GM12878 (cell line): ENCODE measurements at regions of chr6 and their contacts with region 1.

Region 1: GRCh38 chr6:15621203-15622044 is 41.4 kb downstream of the DTNBP1 start:
- DNase-seq: peak; percentile 62
- ATAC-seq: peak; percentile 100
- H3K4me3 ChIP-seq: no peak overlapping the region
- H3K27ac ChIP-seq: peak overlapping the region; percentile 82
- H3K4me1 ChIP-seq: peaks cover 12% of the 10 kb centered on the region
- H3K27me3 ChIP-seq: no peaks in the 10 kb centered on the region
- CTCF ChIP-seq: no peak
- EP300 ChIP-seq: 0 out of 4 replicates have a peak, but pooled peaks of 1 of the 2 experiments have one; percentile 17
- POLR2A ChIP-seq: peak; percentile 54; the same call in 1 of the 2 replicates
- RAD21 ChIP-seq: no peak; the same call in 1 of the 2 replicates

Region 2: GRCh38 chr6:15327271-15327670 is 294.2 kb before region 1 on chr6:
- CTCF ChIA-PET with region 1: interaction called, 3 read pairs
- POLR2A ChIA-PET with region 1: no interaction called
- RAD21 ChIA-PET with region 1: no interaction called
- SMC1A ChIA-PET with region 1: interaction called, 3 read pairs
- in situ Hi-C with region 1: no loop called
- intact Hi-C with region 1: loop called (anchors 10 kb)
- DNase-seq: no peak
- ATAC-seq: peak; percentile 66
- H3K4me3 ChIP-seq: no peak overlapping the region; the same call in 1 of the 2 replicates
- H3K27ac ChIP-seq: peak overlapping the region; percentile 72
- H3K4me1 ChIP-seq: peaks cover 69% of the 10 kb centered on the region
- H3K27me3 ChIP-seq: no peaks in the 10 kb centered on the region
- CTCF ChIP-seq: peak; percentile 57 to 62 (median 60)
- EP300 ChIP-seq: no peak
- POLR2A ChIP-seq: no peak
- RAD21 ChIP-seq: peak; percentile 64

Region 3: GRCh38 chr6:15512126-15512525 is 109.3 kb before region 1 on chr6:
- CTCF ChIA-PET with region 1: interaction called, 19 read pairs
- POLR2A ChIA-PET with region 1: no interaction called
- RAD21 ChIA-PET with region 1: interaction called, 5 read pairs
- SMC1A ChIA-PET with region 1: interaction called, 6 read pairs
- in situ Hi-C with region 1: no loop called
- intact Hi-C with region 1: no loop called
- DNase-seq: no peak
- ATAC-seq: 0 out of 3 replicates have a peak, but pooled peaks have one; percentile 13
- H3K4me3 ChIP-seq: no peak overlapping the region
- H3K27ac ChIP-seq: no peak overlapping the region
- H3K4me1 ChIP-seq: no peaks in the 10 kb centered on the region
- H3K27me3 ChIP-seq: no peaks in the 10 kb centered on the region
- CTCF ChIP-seq: no peak; a peak in 1 of 6 replicates
- EP300 ChIP-seq: no peak
- POLR2A ChIP-seq: 0 out of 2 replicates have a peak, but pooled peaks have one; percentile 26
- RAD21 ChIP-seq: no peak

Region 4: DNA sequence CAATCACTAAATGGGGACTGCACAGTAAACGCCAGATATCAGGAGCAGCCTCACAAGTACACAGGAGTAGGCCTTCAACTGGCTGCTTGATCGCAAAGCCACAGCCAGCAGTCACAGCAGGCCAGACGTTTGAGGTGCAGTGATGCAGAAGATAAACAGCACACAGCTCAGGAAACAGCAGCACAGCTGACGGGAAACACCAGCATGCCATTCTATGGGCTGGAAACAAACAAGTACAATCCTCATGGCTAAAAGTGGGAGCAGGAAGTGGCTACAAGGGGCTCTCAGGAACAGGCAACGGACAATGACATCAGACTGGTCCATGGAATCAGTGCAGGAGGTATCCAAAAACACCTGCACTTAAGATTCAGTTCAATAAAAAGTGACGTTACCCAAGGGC is 69.6 kb before region 1 on chr6:
- CTCF ChIA-PET with region 1: interaction called, 6 read pairs
- POLR2A ChIA-PET with region 1: no interaction called
- RAD21 ChIA-PET with region 1: interaction called, 3 read pairs
- SMC1A ChIA-PET with region 1: interaction called, 13 read pairs
- in situ Hi-C with region 1: no loop called
- intact Hi-C with region 1: no loop called
- DNase-seq: no peak
- ATAC-seq: no peak
- H3K4me3 ChIP-seq: no peak overlapping the region
- H3K27ac ChIP-seq: no peak overlapping the region
- H3K4me1 ChIP-seq: peaks cover 7% of the 10 kb centered on the region
- H3K27me3 ChIP-seq: no peaks in the 10 kb centered on the region
- CTCF ChIP-seq: no peak
- EP300 ChIP-seq: no peak
- POLR2A ChIP-seq: no peak
- RAD21 ChIP-seq: no peak

Region 5: GRCh38 chr6:15662326-15663129 is 41.1 kb after region 1 on chr6 and contains the start of gene DTNBP1:
- CTCF ChIA-PET with region 1: interaction called, 26 read pairs
- POLR2A ChIA-PET with region 1: no interaction called
- RAD21 ChIA-PET with region 1: interaction called, 11 read pairs
- SMC1A ChIA-PET with region 1: interaction called, 48 read pairs
- in situ Hi-C with region 1: no loop called
- intact Hi-C with region 1: no loop called
- DNase-seq: peak; percentile 40
- ATAC-seq: peak; percentile 85
- H3K4me3 ChIP-seq: peak within 1 kb of the TSS; percentile 90
- H3K27ac ChIP-seq: peak within 1 kb of the TSS; percentile 76
- H3K4me1 ChIP-seq: peaks cover 26% of the 10 kb centered on the region
- H3K27me3 ChIP-seq: no peaks in the 10 kb centered on the region; a peak in 1 of 4 replicates
- CTCF ChIP-seq: no peak
- EP300 ChIP-seq: no peak
- POLR2A ChIP-seq: peak; percentile 64
- RAD21 ChIP-seq: no peak
- polyA plus RNA-seq, gene DTNBP1: 10.9 to 20.2 TPM

Region 6: DNA sequence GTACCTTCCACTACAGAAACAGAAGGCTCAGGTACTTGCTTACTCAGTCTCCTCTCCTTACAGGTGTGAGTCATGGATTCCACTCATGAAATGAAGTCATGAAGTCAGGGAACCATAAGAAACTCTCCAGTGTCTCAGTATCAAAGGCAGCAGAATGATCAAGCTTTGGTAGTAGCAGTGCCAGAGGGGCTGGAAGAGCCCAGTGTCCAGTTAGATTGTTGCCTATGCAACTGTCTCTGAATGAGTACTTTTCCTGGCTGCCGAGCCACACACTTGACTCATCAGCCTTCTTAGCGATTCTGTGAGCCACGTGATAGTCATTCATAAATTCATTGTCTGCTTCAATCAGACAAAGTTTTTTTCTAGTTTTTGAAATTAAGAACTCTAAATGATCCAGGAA is 93.6 kb after region 1 on chr6:
- CTCF ChIA-PET with region 1: no interaction called
- POLR2A ChIA-PET with region 1: no interaction called
- RAD21 ChIA-PET with region 1: no interaction called
- SMC1A ChIA-PET with region 1: no interaction called
- in situ Hi-C with region 1: no loop called
- intact Hi-C with region 1: no loop called
- DNase-seq: no peak
- ATAC-seq: no peak
- H3K4me3 ChIP-seq: no peak overlapping the region
- H3K27ac ChIP-seq: no peak overlapping the region
- H3K4me1 ChIP-seq: no peaks in the 10 kb centered on the region
- H3K27me3 ChIP-seq: no peaks in the 10 kb centered on the region
- CTCF ChIP-seq: no peak
- EP300 ChIP-seq: no peak
- POLR2A ChIP-seq: no peak
- RAD21 ChIP-seq: no peak

Region 7: GRCh38 chr6:15997586-15998388 is 376.4 kb after region 1 on chr6:
- CTCF ChIA-PET with region 1: no interaction called
- POLR2A ChIA-PET with region 1: no interaction called
- RAD21 ChIA-PET with region 1: no interaction called
- SMC1A ChIA-PET with region 1: no interaction called
- in situ Hi-C with region 1: no loop called
- intact Hi-C with region 1: no loop called
- DNase-seq: no peak
- ATAC-seq: no peak
- H3K4me3 ChIP-seq: no peak overlapping the region
- H3K27ac ChIP-seq: no peak overlapping the region
- H3K4me1 ChIP-seq: no peaks in the 10 kb centered on the region
- H3K27me3 ChIP-seq: no peaks in the 10 kb centered on the region
- CTCF ChIP-seq: no peak
- EP300 ChIP-seq: no peak
- POLR2A ChIP-seq: no peak
- RAD21 ChIP-seq: no peak

Region 8: DNA sequence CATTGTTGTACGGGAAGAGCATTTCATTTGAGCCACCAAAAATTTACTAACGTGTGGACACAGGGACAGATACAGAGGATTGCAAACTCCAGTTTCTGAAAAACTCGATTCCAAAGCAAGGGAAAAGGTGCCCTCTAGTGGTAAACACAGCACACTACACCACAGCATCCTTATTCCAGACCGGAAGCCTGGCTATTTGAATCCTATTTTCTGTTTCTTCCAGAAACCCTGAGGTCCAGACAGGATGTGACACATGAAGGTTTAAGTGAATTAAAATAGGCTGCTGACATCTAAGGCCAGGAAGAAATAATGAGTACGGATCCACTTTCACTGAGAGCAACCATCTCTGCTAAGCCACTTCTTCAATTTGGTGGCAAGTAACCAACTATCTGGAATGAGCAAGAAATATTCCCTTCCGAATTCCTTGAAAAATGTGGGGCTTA is 585.2 kb after region 1 on chr6:
- CTCF ChIA-PET with region 1: interaction called, 26 read pairs
- POLR2A ChIA-PET with region 1: no interaction called
- RAD21 ChIA-PET with region 1: interaction called, 34 read pairs
- SMC1A ChIA-PET with region 1: interaction called, 36 read pairs
- in situ Hi-C with region 1: no loop called
- intact Hi-C with region 1: loop called (anchors 5 kb)
- DNase-seq: no peak
- ATAC-seq: peak; percentile 57
- H3K4me3 ChIP-seq: no peak overlapping the region
- H3K27ac ChIP-seq: no peak overlapping the region
- H3K4me1 ChIP-seq: peaks cover 16% of the 10 kb centered on the region
- H3K27me3 ChIP-seq: peaks cover 0 to 3% of the 10 kb centered on the region in 2 experiments; a peak in 1 of 4 replicates
- CTCF ChIP-seq: peak; percentile 86 to 95 (median 93)
- EP300 ChIP-seq: no peak
- POLR2A ChIP-seq: no peak
- RAD21 ChIP-seq: peak; percentile 96